IMR-90 (cell line): ENCODE measurements at regions of chr17 and their contacts with region 1.

Region 1: DNA sequence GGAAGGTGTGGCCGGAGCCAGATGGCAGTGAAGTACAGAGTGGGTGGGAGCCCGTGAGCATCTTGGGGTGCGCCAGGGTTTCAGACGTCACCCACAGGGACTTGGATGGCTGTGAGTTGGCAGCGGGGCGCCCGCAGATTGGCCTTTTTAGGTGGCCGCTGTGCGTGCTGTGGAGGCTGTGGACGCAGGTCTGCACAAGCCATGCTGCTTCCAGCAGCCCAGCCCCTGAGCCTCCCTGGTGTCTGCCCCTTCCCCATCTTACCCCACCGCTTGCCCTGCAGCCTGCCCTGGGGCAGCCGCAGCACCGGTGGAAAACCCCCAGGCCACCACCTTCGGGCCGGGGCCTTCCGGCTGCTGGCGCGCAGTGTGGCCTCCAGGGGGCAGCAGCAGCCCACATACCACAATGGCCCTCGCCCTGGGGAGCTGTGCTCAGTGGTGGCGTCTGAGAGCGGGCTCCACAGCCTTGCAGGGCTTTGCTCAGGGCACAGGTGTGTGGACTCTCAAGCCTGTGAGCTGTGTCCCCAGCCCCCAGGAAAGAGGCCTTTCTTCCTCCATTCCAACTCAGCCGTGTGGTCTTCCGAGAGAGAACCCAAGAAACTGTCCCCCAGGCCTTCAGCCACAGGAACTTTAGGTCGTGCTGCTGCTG is 11.8 kb downstream of the ENDOV start:
- DNase-seq: peak; percentile 50
- ATAC-seq: peak; percentile 98
- H3K4me3 ChIP-seq: no peak overlapping the region
- H3K27ac ChIP-seq: no peak overlapping the region
- H3K4me1 ChIP-seq: no peaks in the 10 kb centered on the region
- H3K27me3 ChIP-seq: no peaks in the 10 kb centered on the region
- CTCF ChIP-seq: peak; percentile 94
- POLR2A ChIP-seq: peak; percentile 55; the same call in 1 of the 2 replicates
- RAD21 ChIP-seq: peak; percentile 99

Region 2: DNA sequence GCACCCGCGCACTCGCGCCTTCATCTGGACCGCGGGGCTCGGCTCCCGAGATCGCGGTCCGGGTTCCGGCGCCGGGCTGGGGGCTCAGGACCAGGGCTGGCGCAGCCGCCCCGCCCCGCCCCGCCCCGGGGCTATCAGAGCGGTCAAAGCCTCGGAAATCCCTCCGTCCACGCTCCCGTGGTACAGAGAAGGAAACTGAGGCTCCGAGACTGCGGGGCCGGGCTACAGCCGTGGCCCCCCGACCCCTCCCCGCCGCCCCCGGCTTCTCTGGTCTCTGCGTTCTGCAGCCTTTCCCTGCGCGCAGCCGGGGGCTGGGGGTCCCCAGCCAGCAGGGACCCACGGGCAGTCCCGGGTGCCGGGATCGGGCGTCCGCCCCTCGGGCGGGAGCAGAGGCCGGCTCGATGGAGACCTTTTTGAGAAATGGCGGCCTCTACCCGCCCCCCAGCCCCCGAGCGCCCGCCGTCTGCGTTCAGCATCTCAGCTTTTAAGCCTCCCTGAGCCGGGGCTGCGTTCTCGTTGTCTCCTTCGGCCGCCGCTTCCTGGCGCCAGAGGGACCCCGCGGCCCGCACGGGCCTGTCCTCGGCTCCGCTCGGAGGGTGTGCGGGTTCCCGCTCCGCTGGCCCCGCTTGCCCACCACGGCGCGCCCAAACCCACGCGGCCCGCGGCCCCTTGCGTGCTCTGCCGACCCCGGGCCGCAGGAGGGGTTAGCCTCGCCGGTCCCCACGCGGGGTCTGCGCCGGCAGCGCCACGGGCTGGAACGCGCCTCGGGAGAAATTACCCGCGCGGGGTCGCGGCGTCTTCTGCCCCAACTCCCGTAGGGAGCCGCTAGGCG is 51.1 kb after region 1 on chr17:
- CTCF ChIA-PET with region 1: interaction called, 3 read pairs
- POLR2A ChIA-PET with region 1: no interaction called
- dilution Hi-C with region 1: no loop called
- in situ Hi-C with region 1: no loop called
- intact Hi-C with region 1: loop called (anchors 5 kb)
- DNase-seq: peak; percentile 59
- ATAC-seq: peak; percentile 73
- H3K4me3 ChIP-seq: peak overlapping the region; percentile 47
- H3K27ac ChIP-seq: no peak overlapping the region
- H3K4me1 ChIP-seq: peaks cover 4% of the 10 kb centered on the region; the same call in 1 of the 2 replicates
- H3K27me3 ChIP-seq: peaks cover 63% of the 10 kb centered on the region
- CTCF ChIP-seq: peak; percentile 79
- POLR2A ChIP-seq: no peak
- RAD21 ChIP-seq: peak; percentile 83

Region 3: DNA sequence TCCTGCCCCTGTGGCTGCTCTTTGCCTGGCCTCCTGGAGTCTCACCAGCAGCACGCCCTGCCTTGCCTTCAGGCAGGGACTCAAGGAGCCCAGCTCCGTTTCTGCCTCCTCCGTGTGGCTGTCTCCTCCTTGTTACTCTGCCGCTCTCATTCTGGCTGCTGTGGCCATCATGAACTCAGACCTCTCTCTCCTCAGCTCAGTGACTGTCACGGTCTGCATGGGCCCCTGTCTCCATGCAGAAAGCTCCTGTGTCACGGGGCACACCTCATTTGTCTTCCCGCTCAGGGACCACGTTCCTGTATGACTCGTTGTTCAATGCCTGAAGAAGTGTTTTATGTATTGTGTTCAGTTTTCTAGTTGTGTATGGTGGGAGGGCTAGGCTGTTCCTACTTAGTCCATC is 143.1 kb after region 1 on chr17:
- CTCF ChIA-PET with region 1: no interaction called
- POLR2A ChIA-PET with region 1: no interaction called
- dilution Hi-C with region 1: no loop called
- in situ Hi-C with region 1: loop called (anchors 5 kb)
- intact Hi-C with region 1: loop called (anchors 1 kb)
- DNase-seq: no peak
- ATAC-seq: no peak
- H3K4me3 ChIP-seq: no peak overlapping the region
- H3K27ac ChIP-seq: no peak overlapping the region
- H3K4me1 ChIP-seq: no peaks in the 10 kb centered on the region
- H3K27me3 ChIP-seq: no peaks in the 10 kb centered on the region
- CTCF ChIP-seq: no peak
- POLR2A ChIP-seq: no peak
- RAD21 ChIP-seq: no peak

Region 4: GRCh38 chr17:80876950-80877728 is 450.3 kb after region 1 on chr17:
- CTCF ChIA-PET with region 1: no interaction called
- POLR2A ChIA-PET with region 1: no interaction called
- dilution Hi-C with region 1: no loop called
- in situ Hi-C with region 1: loop called (anchors 10 kb)
- intact Hi-C with region 1: no loop called
- DNase-seq: no peak
- ATAC-seq: no peak
- H3K4me3 ChIP-seq: no peak overlapping the region
- H3K27ac ChIP-seq: no peak overlapping the region
- H3K4me1 ChIP-seq: peaks cover 7% of the 10 kb centered on the region
- H3K27me3 ChIP-seq: no peaks in the 10 kb centered on the region
- CTCF ChIP-seq: no peak
- POLR2A ChIP-seq: no peak
- RAD21 ChIP-seq: no peak

Region 5: GRCh38 chr17:80981062-80981902 is 554.5 kb after region 1 on chr17:
- CTCF ChIA-PET with region 1: interaction called, 3 read pairs
- POLR2A ChIA-PET with region 1: no interaction called
- dilution Hi-C with region 1: no loop called
- in situ Hi-C with region 1: loop called (anchors 5 kb)
- intact Hi-C with region 1: loop called (anchors 2 kb)
- DNase-seq: no peak
- ATAC-seq: peak; percentile 35
- H3K4me3 ChIP-seq: no peak overlapping the region
- H3K27ac ChIP-seq: no peak overlapping the region
- H3K4me1 ChIP-seq: peaks cover 7% of the 10 kb centered on the region
- H3K27me3 ChIP-seq: no peaks in the 10 kb centered on the region
- CTCF ChIP-seq: peak; percentile 78
- POLR2A ChIP-seq: no peak
- RAD21 ChIP-seq: peak; percentile 83